ENCODE measurements at regions of chr17 and their contacts with region 1.

Region 1: GRCh38 chr17:17496189-17497064 is at the start of gene RASD1:
- DNase-seq: peak; percentile 84 to 97 (median 90)
- ATAC-seq: peak; percentile 94
- H3K4me3 ChIP-seq: peak within 1 kb of the TSS; percentile 51 to 59
- H3K27ac ChIP-seq: peak within 1 kb of the TSS; percentile 75 to 82
- H3K4me1 ChIP-seq: peaks cover 10 to 34% of the 10 kb centered on the region in 2 donors
- H3K27me3 ChIP-seq: peaks cover 0 to 21% of the 10 kb centered on the region in 2 donors
- CTCF ChIP-seq: peak; percentile 98
- polyA plus RNA-seq, gene RASD1: 1.4 to 3.3 (median 2.3) TPM

Region 2: GRCh38 chr17:17356149-17356930 is 140.1 kb before region 1 on chr17:
- intact Hi-C with region 1: loop called in 1 of 2 experiments (anchors 10 kb)
- DNase-seq: peak in 3 of 4 donors; percentile 63 to 90 (median 78)
- ATAC-seq: peak; percentile 97
- H3K4me3 ChIP-seq: no peak overlapping the region
- H3K27ac ChIP-seq: no peak overlapping the region
- H3K4me1 ChIP-seq: peaks cover 6% of the 10 kb centered on the region in 2 donors
- H3K27me3 ChIP-seq: peaks cover 0 to 11% of the 10 kb centered on the region in 2 donors
- CTCF ChIP-seq: peak; percentile 95 to 99

Region 3: DNA sequence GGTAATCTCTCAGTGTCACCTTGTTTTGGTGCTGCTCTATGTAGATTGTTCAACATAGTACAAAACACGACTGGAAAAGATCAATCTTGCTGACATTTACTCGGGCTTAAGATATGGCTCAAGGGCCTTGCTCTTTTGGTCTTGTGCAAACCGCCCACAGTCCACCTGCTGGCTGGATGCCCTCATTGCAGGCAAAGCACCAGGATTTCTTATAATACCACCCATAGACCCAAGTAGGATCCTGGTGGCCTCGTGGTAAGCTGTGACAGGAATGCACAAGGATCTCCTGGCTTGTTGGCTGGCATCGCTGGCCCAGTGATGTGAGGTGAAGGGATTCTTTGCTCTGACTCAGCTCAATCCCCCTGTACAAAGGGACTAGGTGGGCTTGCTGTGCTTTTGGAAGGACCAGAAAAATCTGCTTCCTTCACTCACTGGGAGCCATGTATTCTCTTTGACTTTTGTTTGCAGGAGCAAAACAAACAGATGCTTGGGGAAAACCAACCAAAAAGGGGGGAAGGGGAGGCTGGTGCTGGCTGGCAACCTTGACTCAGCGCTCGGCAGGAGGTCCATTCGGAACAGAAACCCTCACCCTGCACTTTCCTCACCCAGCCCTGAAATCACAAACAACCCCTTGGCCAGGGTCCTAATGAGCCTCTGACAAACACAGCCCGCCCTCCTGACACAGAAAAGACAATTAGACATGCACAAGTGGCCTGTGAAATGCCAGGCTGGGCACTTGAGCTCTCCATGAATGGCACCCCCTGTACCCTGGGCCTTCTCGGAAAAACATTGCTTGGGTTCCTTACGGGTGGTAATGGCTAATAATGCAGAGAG is 56.2 kb before region 1 on chr17:
- intact Hi-C with region 1: no loop called
- DNase-seq: peak in 2 of 4 donors; percentile 53 to 86
- ATAC-seq: peak; percentile 72
- H3K4me3 ChIP-seq: no peak overlapping the region
- H3K27ac ChIP-seq: peak overlapping the region; percentile 2 to 40
- H3K4me1 ChIP-seq: peaks cover 2 to 6% of the 10 kb centered on the region in 2 donors
- H3K27me3 ChIP-seq: no peaks in the 10 kb centered on the region
- CTCF ChIP-seq: peak; percentile 41 to 62

Region 4: GRCh38 chr17:17568749-17569195 is 72.3 kb after region 1 on chr17:
- intact Hi-C with region 1: loop called in 1 of 2 experiments (anchors 5 kb)
- DNase-seq: peak in 3 of 4 donors; percentile 43 to 94 (median 68)
- ATAC-seq: peak; percentile 79
- H3K4me3 ChIP-seq: no peak overlapping the region
- H3K27ac ChIP-seq: no peak overlapping the region
- H3K4me1 ChIP-seq: peaks cover 4 to 16% of the 10 kb centered on the region in 2 donors
- H3K27me3 ChIP-seq: no peaks in the 10 kb centered on the region
- CTCF ChIP-seq: peak; percentile 54 to 73

Region 5: GRCh38 chr17:17580662-17581470 is 84.4 kb after region 1 on chr17:
- intact Hi-C with region 1: loop called in 1 of 2 experiments (anchors 10 kb)
- DNase-seq: no peak
- ATAC-seq: no peak
- H3K4me3 ChIP-seq: no peak overlapping the region
- H3K27ac ChIP-seq: no peak overlapping the region
- H3K4me1 ChIP-seq: no peaks in the 10 kb centered on the region
- H3K27me3 ChIP-seq: no peaks in the 10 kb centered on the region
- CTCF ChIP-seq: no peak

Region 6: DNA sequence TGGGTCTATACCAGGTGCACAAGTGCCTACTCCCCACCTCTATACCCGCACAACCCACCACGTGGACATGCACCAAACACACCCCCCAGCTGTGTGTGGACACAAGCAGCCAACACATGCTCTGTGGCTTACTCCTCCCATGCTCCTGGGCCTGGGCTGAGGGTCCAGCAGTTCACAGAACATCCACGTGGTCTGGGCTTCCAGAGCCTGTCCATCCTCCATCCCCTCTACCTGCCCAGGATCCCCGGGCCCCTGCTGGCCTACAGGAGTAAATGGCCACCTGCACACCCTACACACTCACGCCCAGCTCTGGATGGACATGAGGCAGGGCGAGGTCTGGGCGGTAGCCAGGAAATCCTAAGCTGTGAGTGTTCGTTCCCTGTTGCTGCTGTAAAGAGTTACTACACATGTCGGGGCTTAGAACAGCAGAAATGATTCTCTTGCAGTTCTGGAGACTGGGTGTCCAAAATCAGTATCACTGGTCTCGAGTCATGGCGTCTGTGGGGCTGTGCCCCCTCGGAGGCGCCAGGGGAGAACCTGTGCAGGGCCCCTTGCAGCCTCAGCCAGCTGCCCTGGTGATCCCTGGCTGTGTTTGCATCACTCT is 169.8 kb after region 1 on chr17:
- intact Hi-C with region 1: no loop called
- DNase-seq: no peak
- ATAC-seq: peak; percentile 10
- H3K4me3 ChIP-seq: no peak overlapping the region
- H3K27ac ChIP-seq: no peak overlapping the region
- H3K4me1 ChIP-seq: peaks cover 0 to 3% of the 10 kb centered on the region in 2 donors
- H3K27me3 ChIP-seq: no peaks in the 10 kb centered on the region
- CTCF ChIP-seq: no peak

Measured in left lung (tissue), 14 donors.